ENCODE measurements at regions of chr14 and their contacts with region 1.

Region 1: DNA sequence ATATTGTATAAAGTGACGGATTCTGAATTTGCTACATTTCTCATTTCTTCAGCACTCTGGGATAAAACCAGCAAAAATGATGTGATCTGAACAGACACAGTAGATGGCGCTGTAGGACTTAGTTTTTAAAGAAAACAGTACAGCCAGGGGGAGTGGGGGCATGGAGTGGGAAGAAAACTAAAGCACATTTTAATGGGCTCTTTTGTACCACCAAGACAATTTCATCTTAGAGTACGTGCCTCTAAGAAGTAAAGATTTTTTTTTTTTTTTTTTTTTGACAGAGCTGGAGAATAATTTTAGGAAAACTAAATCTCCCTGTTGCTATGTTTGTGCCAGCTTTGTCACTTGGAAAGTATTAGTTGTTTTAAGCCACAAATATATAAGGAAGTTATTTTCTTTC is 124.4 kb downstream of the RAD51B start:
- DNase-seq: peak in 4 of 5 donors; percentile 70 to 76 (median 72)
- ATAC-seq: peak; percentile 44 to 76 (median 68)
- H3K4me3 ChIP-seq: no peak overlapping the region
- H3K27ac ChIP-seq: peak overlapping the region in 5 of 12 donors; percentile 16 to 82 (median 47)
- H3K4me1 ChIP-seq: peaks cover 0 to 49% (median 23%) of the 10 kb centered on the region in 12 donors
- H3K27me3 ChIP-seq: no peaks in the 10 kb centered on the region
- CTCF ChIP-seq: peak; percentile 58 to 82 (median 76)
- POLR2A ChIP-seq: no peak

Region 2: GRCh38 chr14:67999693-68000384 is 55.9 kb after region 1 on chr14:
- intact Hi-C with region 1: no loop called
- DNase-seq: no peak
- ATAC-seq: no peak
- H3K4me3 ChIP-seq: no peak overlapping the region
- H3K27ac ChIP-seq: peak overlapping the region in 4 of 12 donors; percentile 17 to 35 (median 30)
- H3K4me1 ChIP-seq: peaks cover 0 to 11% (median 0%) of the 10 kb centered on the region in 12 donors
- H3K27me3 ChIP-seq: no peaks in the 10 kb centered on the region
- CTCF ChIP-seq: no peak
- POLR2A ChIP-seq: no peak

Region 3: GRCh38 chr14:68140111-68140741 is 196.3 kb after region 1 on chr14:
- intact Hi-C with region 1: loop called in 2 of 10 experiments (anchors 5 to 10 kb)
- DNase-seq: peak in 4 of 5 donors; percentile 24 to 61 (median 42)
- ATAC-seq: peak in 3 of 4 donors; percentile 48 to 73 (median 56)
- H3K4me3 ChIP-seq: no peak overlapping the region
- H3K27ac ChIP-seq: peak overlapping the region in 11 of 12 donors; percentile 35 to 89 (median 53)
- H3K4me1 ChIP-seq: peaks cover 3 to 71% (median 35%) of the 10 kb centered on the region in 12 donors
- H3K27me3 ChIP-seq: no peaks in the 10 kb centered on the region
- CTCF ChIP-seq: no peak
- POLR2A ChIP-seq: peak in 1 of 2 donors; percentile 32

Region 4: GRCh38 chr14:68146807-68147206 is 202.9 kb after region 1 on chr14:
- intact Hi-C with region 1: loop called in 2 of 10 experiments (anchors 5 to 10 kb)
- DNase-seq: no peak
- ATAC-seq: peak in 2 of 4 donors; percentile 14 to 36
- H3K4me3 ChIP-seq: no peak overlapping the region
- H3K27ac ChIP-seq: peak overlapping the region in 9 of 12 donors; percentile 15 to 89 (median 64)
- H3K4me1 ChIP-seq: peaks cover 0 to 40% (median 20%) of the 10 kb centered on the region in 12 donors
- H3K27me3 ChIP-seq: no peaks in the 10 kb centered on the region
- CTCF ChIP-seq: no peak
- POLR2A ChIP-seq: no peak

Region 5: DNA sequence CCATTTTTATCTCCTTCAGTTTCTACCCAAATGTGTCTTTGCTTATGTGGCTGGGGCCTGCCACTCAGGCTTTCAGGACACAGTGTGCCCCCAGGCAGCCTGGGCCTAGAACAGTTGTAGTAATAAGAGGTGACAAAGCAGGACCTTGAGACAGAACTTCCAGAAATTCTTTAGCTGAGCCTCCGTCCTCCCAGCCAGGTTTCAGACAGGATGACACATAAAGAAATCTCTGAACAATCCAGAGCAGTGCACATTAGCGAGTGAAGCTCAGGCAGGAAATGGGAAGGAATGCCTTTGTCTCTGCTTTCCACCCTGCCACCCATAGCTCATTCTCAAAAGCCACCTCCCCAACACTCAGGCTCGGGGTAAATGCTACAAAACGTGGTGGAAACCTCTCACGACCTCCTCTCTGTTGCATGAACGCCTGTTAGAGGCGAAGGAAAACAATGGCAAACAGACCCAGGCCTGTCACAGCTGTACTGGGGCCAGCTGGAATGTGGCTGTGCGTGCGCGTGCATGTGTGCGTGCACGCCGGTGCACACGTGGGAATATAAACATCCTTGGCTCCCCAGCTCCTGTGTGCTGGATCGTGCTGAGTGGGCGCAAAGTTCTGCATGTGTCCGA is 562.2 kb after region 1 on chr14:
- intact Hi-C with region 1: loop called in 1 of 10 experiments (anchors 10 kb)
- DNase-seq: peak in 2 of 5 donors; percentile 28 to 55
- ATAC-seq: peak in 2 of 4 donors; percentile 18 to 50
- H3K4me3 ChIP-seq: no peak overlapping the region
- H3K27ac ChIP-seq: peak overlapping the region in 9 of 12 donors; percentile 4 to 62 (median 29)
- H3K4me1 ChIP-seq: peaks cover 0 to 44% (median 31%) of the 10 kb centered on the region in 12 donors
- H3K27me3 ChIP-seq: no peaks in the 10 kb centered on the region
- CTCF ChIP-seq: no peak
- POLR2A ChIP-seq: no peak

Region 6: DNA sequence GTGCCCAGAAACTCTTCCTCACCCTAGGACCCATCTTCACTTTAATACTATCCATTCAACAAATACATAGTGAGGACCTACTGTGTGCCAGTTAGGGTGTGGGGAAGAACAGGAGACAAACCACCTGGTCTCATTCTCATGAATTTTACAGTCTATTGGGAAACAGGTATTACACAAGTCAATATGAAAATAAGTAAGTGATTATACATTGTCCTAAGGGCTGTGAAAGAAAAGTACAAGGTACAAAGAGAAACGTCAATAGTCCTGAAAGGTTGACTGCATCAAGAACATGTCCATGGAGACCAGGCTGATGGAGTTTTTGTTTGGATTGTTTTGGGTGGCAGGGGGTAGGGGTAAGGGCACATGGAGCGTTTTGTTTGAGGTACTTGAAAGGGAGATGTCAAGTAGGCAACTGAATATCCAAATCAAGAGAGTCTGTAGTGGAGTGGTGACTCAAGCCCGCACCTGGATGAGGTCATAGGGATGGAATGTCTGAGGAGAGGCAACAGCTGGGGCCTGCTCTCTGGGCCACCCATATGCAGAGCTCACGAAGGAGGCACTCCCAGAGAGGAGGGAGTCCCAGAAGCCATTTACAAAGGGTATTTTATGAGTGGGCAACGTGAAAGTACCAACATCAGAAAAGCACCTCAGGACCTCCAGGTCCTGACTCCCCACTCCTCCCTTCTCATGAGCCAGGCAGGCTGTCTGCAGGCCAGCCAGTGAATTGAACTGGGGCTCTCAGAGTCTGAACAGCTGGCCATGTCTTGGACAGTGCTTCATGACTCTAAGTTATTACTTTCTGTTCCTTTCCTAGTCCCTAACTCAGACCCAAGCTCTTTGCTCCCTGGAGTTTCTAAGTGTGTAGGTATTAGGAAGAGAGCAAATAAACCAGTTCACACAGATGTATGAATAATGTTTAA is 577.0 kb after region 1 on chr14:
- intact Hi-C with region 1: loop called in 2 of 10 experiments (anchors 10 kb)
- DNase-seq: no peak
- ATAC-seq: peak in 1 of 4 donors; percentile 30
- H3K4me3 ChIP-seq: no peak overlapping the region
- H3K27ac ChIP-seq: peak overlapping the region in 7 of 12 donors; percentile 51 to 74 (median 60)
- H3K4me1 ChIP-seq: peaks cover 0 to 74% (median 49%) of the 10 kb centered on the region in 12 donors
- H3K27me3 ChIP-seq: no peaks in the 10 kb centered on the region
- CTCF ChIP-seq: no peak
- POLR2A ChIP-seq: no peak

Region 7: DNA sequence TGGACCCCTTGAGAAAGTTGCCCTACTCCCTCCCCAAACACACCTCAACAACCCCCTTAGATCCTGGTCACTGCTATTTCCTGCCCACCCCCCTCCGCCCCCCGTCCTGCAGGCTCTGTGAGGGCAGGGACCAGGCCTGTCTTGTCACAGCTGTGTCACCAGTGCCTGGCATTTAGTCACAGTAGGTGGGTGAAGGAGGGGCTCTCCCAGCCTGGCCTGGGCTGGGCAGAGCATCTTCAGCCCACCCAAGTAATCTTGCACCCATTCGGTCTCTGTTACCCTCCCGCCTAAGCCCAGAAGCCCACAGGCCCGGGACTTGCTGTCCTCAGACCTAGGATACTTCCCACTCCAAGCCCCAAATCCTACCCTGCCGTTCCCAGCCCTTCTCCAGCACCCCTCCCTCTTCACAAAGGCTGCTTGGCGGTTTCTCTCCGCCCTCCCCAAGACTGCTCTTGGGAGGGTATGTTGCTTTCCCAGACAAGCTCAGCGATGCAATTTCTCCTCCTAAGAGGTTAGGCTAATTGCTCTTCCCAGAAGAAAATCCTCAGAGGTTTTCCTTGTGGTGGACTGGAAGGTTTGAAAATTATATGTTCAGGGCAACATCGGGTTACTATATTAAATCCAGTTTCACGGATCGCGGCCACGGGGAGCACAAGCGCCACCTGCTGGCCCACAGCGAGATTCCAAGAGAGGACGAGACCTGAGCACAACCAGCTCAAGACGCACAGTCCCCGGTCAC is 899.7 kb after region 1 on chr14:
- intact Hi-C with region 1: loop called in 1 of 10 experiments (anchors 5 kb)
- DNase-seq: peak; percentile 75 to 90 (median 78)
- ATAC-seq: peak; percentile 76 to 91 (median 86)
- H3K4me3 ChIP-seq: peak overlapping the region in 9 of 12 donors; percentile 30 to 57 (median 38)
- H3K27ac ChIP-seq: peak overlapping the region in 2 of 12 donors; percentile 36 to 74
- H3K4me1 ChIP-seq: peaks cover 0 to 13% (median 5%) of the 10 kb centered on the region in 12 donors
- H3K27me3 ChIP-seq: no peaks in the 10 kb centered on the region
- CTCF ChIP-seq: peak; percentile 84 to 95 (median 92)
- POLR2A ChIP-seq: no peak

Measured in heart left ventricle (tissue), 16 donors.